ENCODE measurements at regions of chr4 and their contacts with region 1.

Region 1: GRCh38 chr4:151031831-151032605 is 16.9 kb upstream of the LRBA start:
- DNase-seq: peak; percentile 44
- H3K4me3 Mint-ChIP-seq: peak overlapping the region; percentile 35
- H3K27ac Mint-ChIP-seq: peak overlapping the region; percentile 85
- H3K4me1 Mint-ChIP-seq: peaks cover 40% of the 10 kb centered on the region
- H3K27me3 Mint-ChIP-seq: no peaks in the 10 kb centered on the region

Region 2: DNA sequence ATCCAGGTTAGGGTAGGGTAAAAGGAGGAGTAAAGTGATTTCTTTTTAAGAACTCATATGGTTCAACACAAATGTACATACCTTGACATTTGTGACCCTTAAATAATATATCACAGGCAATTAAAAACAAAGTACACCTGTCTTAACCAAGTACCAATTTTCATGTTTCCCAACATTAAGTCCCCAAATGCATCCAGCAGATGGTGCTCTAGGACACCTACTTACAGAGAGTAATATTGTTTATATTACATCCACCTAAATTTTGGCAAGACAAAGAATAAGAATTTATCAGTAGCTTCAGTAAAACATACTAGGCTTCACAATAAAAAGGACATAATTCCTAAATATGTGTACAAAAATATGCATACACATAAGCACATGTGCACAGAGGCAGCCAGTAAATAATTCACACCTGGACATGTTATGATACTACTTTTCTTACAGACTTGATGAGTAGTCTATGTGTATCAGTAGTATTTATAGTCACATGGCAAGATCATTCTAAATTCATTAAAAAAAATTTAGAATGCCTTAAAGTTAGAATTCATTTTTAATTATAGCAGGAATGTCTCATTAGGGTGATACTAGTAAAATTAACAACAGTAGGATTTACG is 734.0 kb before region 1 on chr4:
- CTCF ChIA-PET with region 1: no interaction called
- intact Hi-C with region 1: loop called (anchors 5 kb)
- DNase-seq: peak; percentile 68
- H3K4me3 Mint-ChIP-seq: no peak overlapping the region
- H3K27ac Mint-ChIP-seq: no peak overlapping the region
- H3K4me1 Mint-ChIP-seq: peaks cover 14% of the 10 kb centered on the region
- H3K27me3 Mint-ChIP-seq: no peaks in the 10 kb centered on the region

Region 3: GRCh38 chr4:150436598-150437370 is 595.2 kb before region 1 on chr4:
- CTCF ChIA-PET with region 1: interaction called, 3 read pairs
- intact Hi-C with region 1: loop called (anchors 2 kb)
- DNase-seq: peak; percentile 42
- H3K4me3 Mint-ChIP-seq: no peak overlapping the region
- H3K27ac Mint-ChIP-seq: peak overlapping the region; percentile 66
- H3K4me1 Mint-ChIP-seq: peaks cover 15% of the 10 kb centered on the region
- H3K27me3 Mint-ChIP-seq: no peaks in the 10 kb centered on the region

Region 4: GRCh38 chr4:150828159-150828558 is 203.9 kb before region 1 on chr4:
- CTCF ChIA-PET with region 1: no interaction called
- intact Hi-C with region 1: loop called (anchors 1 kb)
- DNase-seq: peak; percentile 17
- H3K4me3 Mint-ChIP-seq: no peak overlapping the region
- H3K27ac Mint-ChIP-seq: no peak overlapping the region
- H3K4me1 Mint-ChIP-seq: peaks cover 12% of the 10 kb centered on the region
- H3K27me3 Mint-ChIP-seq: no peaks in the 10 kb centered on the region

Region 5: DNA sequence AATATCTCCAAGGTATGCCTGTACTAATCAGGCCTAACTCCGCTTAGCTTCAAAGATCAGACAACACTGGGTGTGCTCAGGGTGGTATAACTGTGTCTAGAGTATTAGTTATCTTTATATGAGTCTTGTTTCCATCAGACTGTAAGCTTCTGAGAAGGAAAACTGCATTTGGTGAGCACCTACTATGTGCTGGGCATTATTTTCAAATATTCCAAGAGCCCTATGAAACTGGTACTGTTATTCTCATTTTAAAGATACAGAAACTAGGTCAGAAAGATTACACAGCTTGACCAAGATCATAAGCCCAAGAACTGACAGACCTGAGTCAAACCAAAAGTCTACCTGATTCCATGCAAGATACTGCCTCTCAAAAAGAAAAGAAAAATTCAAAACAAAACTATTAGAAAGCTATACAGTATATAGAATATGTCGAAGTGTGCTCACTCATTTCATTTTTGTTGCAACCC is 61.3 kb before region 1 on chr4:
- CTCF ChIA-PET with region 1: no interaction called
- intact Hi-C with region 1: loop called (anchors 1 kb)
- DNase-seq: no peak
- H3K4me3 Mint-ChIP-seq: no peak overlapping the region
- H3K27ac Mint-ChIP-seq: peak overlapping the region; percentile 8
- H3K4me1 Mint-ChIP-seq: peaks cover 49% of the 10 kb centered on the region
- H3K27me3 Mint-ChIP-seq: no peaks in the 10 kb centered on the region

Region 6: DNA sequence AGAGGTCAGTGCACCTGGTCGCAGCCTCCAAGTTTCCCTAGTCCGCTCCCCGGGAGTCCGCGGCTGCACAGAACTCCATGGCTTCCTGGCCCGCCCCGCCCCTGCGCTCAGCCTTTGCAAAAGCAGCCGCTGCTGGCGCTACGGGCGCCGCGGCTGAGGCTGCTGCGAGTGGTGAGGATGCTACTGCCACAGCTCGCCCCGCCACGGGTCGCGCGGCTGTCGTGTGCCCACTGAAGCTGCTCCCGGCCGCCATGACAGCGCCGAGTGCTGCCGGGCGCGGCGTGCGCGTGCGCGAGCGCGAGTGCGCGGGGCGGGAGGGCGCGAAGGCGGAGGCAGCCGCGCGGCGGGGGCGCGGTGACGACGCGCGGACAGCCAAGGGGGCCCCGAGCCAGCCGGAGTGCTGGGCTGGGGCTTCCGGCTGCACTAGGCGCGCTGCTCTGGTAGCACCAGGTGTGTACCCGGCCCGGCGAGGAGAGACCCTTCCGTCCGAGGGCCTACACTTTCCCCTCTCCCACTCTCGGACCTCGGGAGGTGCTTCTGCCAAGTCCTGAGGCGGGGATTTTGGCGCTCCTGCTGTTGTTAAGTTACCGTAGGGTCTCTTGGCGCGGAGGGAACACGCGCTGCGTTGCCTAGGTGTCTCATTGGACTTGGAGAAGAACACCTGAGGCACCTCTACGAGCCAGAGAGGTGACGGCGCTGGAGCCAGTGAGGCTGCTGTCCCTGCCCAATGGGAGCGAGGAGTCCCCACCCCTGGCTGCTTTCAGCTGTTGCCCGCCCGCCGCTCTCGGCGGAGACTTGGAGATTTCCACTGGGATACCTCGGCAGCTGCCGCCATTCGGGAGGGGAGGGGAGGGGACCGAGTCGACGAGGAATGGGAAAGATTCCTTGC is 16.3 kb before region 1 on chr4:
- CTCF ChIA-PET with region 1: interaction called, 8 read pairs
- intact Hi-C with region 1: loop called (anchors 1 kb)
- DNase-seq: peak; percentile 71
- H3K4me3 Mint-ChIP-seq: peak overlapping the region; percentile 100
- H3K27ac Mint-ChIP-seq: peak overlapping the region; percentile 99
- H3K4me1 Mint-ChIP-seq: peaks cover 23% of the 10 kb centered on the region
- H3K27me3 Mint-ChIP-seq: no peaks in the 10 kb centered on the region

Measured in activated naive CD4-positive, alpha-beta T cell treated with anti-CD3 and anti-CD28 coated beads for 36 hours (primary cell).